A673 (cell line): ENCODE measurements at regions of chr2 and their contacts with region 1.

Region 1: DNA sequence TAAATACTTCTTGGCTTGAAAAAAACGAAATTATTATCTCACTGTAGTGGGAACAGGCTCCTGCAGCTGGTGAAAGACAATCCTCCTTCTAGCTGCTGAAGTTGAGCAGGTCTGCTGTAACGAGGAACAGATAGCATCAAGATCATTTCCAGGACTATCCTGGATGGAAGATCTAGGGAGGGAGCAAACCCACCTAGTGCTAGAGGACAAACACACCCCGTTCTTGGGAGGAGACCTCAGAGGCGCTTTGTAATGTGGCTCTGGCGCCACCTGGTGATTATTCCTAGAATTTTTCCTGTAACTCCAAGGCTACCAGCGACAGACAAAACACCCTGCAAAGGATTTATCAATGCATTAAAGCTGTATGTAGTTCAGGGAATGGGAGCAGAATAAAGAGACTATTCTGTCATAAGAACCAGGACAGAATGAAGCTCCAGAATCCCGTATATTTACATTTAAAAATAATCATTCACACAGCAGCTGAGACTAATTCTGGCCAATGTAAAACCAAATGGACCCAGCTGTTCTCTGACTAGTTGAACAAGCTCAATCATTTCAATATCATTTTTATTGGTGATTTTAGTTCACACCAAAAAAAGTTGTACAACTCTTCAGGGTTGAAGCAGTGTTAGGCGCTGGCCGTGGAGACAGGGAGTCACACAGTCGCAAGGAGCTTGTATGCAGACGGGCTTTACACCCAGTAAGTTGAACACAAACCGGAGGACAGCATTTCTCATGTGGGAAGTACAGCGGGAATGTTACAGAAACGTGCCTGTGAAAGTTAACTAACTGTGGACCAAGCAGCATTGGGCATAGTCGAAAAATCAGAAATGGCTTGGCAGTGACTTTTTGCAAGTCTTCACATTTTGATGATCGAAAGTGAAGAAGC is 290.3 kb downstream of the TRIB2 start:
- DNase-seq: peak; percentile 90
- H3K4me3 ChIP-seq: peak overlapping the region; percentile 15
- H3K27ac ChIP-seq: no peak overlapping the region
- H3K4me1 ChIP-seq: peaks cover 35% of the 10 kb centered on the region
- H3K27me3 ChIP-seq: no peaks in the 10 kb centered on the region
- CTCF ChIP-seq: peak; percentile 78

Region 2: DNA sequence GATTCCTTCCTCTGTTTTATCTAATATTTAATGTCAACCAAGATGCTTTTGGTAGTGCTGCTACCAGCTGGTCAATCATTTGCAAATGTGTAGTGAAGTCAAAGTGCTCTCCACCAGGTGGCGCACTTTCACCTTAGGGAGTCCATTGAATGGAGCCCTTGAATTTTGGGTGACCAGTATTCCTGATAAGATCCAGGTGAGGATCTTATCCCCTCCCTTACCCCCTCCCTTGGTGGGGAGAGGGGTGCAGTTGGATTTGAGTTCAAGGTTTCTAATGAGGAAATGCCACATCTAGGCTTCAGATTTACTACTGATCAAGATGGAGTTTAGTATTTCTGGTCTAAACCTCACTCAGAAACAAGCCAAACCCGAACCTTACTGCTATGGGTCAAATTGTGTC is 1529.1 kb before region 1 on chr2:
- CTCF ChIA-PET with region 1: no interaction called
- POLR2A ChIA-PET with region 1: no interaction called
- intact Hi-C with region 1: loop called (anchors 5 kb)
- DNase-seq: peak; percentile 86
- H3K4me3 ChIP-seq: no peak overlapping the region
- H3K27ac ChIP-seq: no peak overlapping the region
- H3K4me1 ChIP-seq: peaks cover 4% of the 10 kb centered on the region
- H3K27me3 ChIP-seq: peaks cover 5% of the 10 kb centered on the region
- CTCF ChIP-seq: peak; percentile 89

Region 3: GRCh38 chr2:11829947-11830707 is 1176.9 kb before region 1 on chr2:
- CTCF ChIA-PET with region 1: interaction called, 4 read pairs
- POLR2A ChIA-PET with region 1: no interaction called
- intact Hi-C with region 1: loop called (anchors 1 kb)
- DNase-seq: peak; percentile 99
- H3K4me3 ChIP-seq: peak overlapping the region; percentile 37
- H3K27ac ChIP-seq: peak overlapping the region; percentile 99
- H3K4me1 ChIP-seq: peaks cover 42% of the 10 kb centered on the region
- H3K27me3 ChIP-seq: no peaks in the 10 kb centered on the region
- CTCF ChIP-seq: peak; percentile 67

Region 4: GRCh38 chr2:12416600-12416999 is 590.5 kb before region 1 on chr2:
- CTCF ChIA-PET with region 1: no interaction called
- POLR2A ChIA-PET with region 1: no interaction called
- intact Hi-C with region 1: loop called (anchors 10 kb)
- DNase-seq: peak; percentile 58
- H3K4me3 ChIP-seq: no peak overlapping the region
- H3K27ac ChIP-seq: no peak overlapping the region
- H3K4me1 ChIP-seq: no peaks in the 10 kb centered on the region
- H3K27me3 ChIP-seq: no peaks in the 10 kb centered on the region
- CTCF ChIP-seq: peak; percentile 62

Region 5: DNA sequence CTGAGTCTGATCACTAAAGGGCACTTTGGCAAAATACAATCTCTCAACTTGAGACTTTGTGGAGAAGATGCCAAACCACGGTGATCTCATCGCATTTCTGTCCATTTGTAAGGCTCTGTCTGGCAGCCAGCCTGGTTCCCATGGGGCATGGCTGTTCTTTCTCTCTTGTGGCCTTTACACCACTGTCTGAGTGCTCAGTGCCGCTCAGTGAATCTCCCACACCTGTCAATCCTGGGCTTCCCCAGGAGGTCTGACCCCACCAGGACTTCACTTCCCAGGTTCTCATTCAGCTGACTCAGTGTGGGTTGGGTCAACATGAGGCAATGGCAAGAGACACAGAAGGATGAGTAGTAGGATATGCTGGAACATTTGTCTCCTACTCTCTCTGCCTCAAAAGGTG is 387.1 kb before region 1 on chr2:
- CTCF ChIA-PET with region 1: no interaction called
- POLR2A ChIA-PET with region 1: no interaction called
- intact Hi-C with region 1: loop called (anchors 10 kb)
- DNase-seq: peak; percentile 12
- H3K4me3 ChIP-seq: no peak overlapping the region
- H3K27ac ChIP-seq: no peak overlapping the region
- H3K4me1 ChIP-seq: peaks cover 2% of the 10 kb centered on the region
- H3K27me3 ChIP-seq: no peaks in the 10 kb centered on the region
- CTCF ChIP-seq: no peak

Region 6: DNA sequence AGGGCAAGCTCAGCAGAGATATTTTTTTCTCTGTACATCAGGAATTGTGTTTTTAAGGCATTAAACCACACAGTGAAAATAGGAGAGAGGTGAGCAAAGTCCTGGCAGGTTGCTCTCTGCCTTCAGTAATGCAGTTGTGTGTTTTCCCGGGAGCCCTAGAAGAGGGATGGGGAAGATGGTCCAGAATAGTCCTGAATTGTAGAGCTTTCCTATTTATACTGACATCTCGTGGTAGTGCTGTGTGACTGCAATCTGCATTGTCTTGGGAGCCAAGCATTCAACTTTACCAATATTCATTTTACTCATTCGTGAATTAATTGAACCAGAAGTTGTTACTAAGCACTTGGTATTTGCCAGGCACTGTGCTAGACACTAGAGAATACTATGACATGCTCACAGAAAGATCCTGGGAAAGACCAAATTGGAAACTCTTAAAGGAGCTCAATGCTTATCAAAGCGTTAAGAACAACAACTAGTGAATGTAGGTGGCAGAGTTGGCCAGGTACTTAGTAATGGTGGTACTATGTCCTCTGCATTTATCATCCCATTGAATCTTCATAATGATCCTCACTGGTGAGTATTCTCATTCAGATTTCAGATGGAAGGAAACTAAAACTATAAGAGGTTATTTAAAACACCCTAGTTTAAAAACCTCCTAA is 75.8 kb before region 1 on chr2:
- CTCF ChIA-PET with region 1: interaction called, 6 read pairs
- POLR2A ChIA-PET with region 1: no interaction called
- intact Hi-C with region 1: loop called (anchors 2 kb)
- DNase-seq: peak; percentile 72
- H3K4me3 ChIP-seq: no peak overlapping the region
- H3K27ac ChIP-seq: no peak overlapping the region
- H3K4me1 ChIP-seq: peaks cover 33% of the 10 kb centered on the region
- H3K27me3 ChIP-seq: no peaks in the 10 kb centered on the region
- CTCF ChIP-seq: peak; percentile 94

Region 7: GRCh38 chr2:13779996-13780395 is 772.9 kb after region 1 on chr2:
- CTCF ChIA-PET with region 1: no interaction called
- POLR2A ChIA-PET with region 1: no interaction called
- intact Hi-C with region 1: no loop called
- DNase-seq: no peak
- H3K4me3 ChIP-seq: no peak overlapping the region
- H3K27ac ChIP-seq: no peak overlapping the region
- H3K4me1 ChIP-seq: no peaks in the 10 kb centered on the region
- H3K27me3 ChIP-seq: no peaks in the 10 kb centered on the region
- CTCF ChIP-seq: no peak